ENCODE measurements at regions of chr1 and their contacts with region 1.

Region 1: DNA sequence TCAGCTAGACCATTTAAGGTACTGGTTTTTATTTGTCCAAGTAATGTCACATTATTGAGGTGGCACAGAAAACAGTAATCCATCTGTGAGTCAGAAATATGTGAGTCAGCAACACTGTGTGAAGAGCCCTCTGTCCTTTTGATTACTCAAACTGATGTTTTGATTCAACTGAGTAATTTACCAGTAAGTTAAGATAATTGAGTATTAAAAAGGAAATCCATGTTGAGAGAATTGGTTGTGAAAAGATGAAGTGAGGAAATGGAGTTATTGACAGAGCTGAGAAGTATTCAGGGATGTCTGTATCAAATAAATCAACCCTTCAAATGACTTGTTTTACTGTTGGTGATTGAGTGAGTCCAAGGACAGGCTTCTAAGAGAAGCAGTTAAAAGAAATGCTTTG is 302.7 kb upstream of the SGIP1 start:
- DNase-seq: peak; percentile 55
- H3K4me3 ChIP-seq: no peak overlapping the region
- H3K27ac ChIP-seq: no peak overlapping the region
- H3K4me1 ChIP-seq: no peaks in the 10 kb centered on the region
- H3K27me3 ChIP-seq: no peaks in the 10 kb centered on the region
- CTCF ChIP-seq: no peak

Region 2: GRCh38 chr1:66132324-66132723 is 98.9 kb before region 1 on chr1:
- CTCF ChIA-PET with region 1: no interaction called
- dilution Hi-C with region 1: loop called (anchors 5 kb)
- in situ Hi-C with region 1: no loop called
- intact Hi-C with region 1: no loop called
- DNase-seq: no peak
- H3K4me3 ChIP-seq: no peak overlapping the region
- H3K27ac ChIP-seq: no peak overlapping the region
- H3K4me1 ChIP-seq: no peaks in the 10 kb centered on the region
- H3K27me3 ChIP-seq: no peaks in the 10 kb centered on the region
- CTCF ChIP-seq: no peak

Measured in mammary epithelial cell (primary cell).